ENCODE measurements at regions of chr18 and their contacts with region 1.

Region 1: GRCh38 chr18:49076654-49077166 is 125.9 kb upstream of the SMAD7 start:
- DNase-seq: no peak

Region 2: DNA sequence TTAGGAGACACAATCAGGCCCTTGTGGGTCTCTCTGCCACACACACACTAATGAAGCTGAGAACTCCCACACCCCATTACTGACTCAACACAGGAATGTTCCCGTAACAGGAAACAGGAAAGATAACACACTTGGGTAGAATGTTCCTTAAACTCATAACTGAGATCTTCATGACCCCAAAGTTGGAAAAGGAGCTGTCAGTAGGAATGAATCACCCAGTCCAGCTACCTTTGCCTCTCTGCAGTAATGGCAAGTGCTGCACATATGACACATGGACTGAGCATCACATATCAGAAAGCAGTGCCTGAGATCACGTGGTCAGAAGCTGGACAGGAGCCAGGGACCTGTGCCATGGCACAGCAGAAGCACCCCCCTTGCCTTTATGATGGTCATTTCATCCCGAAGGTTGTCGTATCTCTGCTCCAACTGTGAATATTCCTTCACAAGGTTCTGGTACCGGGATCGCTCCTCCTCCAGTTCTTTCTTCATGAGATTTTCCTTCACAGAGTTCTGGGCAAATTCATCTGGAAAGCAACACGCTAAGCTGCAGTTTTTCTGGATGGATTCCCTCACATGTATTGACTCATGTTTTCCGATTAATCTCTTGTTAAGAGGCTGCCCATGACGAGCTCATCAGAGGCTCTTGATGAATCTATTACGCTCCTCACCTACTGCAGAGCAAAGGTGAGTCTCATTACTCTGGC is 802.0 kb after region 1 on chr18:
- intact Hi-C with region 1: loop called in 1 of 2 experiments (anchors 5 kb)
- DNase-seq: no peak

Measured in posterior vena cava (tissue), 2 donors.